Dorsolateral prefrontal cortex (tissue), 120 donors: ENCODE measurements at regions of chr17 and their contacts with region 1.

Region 1: DNA sequence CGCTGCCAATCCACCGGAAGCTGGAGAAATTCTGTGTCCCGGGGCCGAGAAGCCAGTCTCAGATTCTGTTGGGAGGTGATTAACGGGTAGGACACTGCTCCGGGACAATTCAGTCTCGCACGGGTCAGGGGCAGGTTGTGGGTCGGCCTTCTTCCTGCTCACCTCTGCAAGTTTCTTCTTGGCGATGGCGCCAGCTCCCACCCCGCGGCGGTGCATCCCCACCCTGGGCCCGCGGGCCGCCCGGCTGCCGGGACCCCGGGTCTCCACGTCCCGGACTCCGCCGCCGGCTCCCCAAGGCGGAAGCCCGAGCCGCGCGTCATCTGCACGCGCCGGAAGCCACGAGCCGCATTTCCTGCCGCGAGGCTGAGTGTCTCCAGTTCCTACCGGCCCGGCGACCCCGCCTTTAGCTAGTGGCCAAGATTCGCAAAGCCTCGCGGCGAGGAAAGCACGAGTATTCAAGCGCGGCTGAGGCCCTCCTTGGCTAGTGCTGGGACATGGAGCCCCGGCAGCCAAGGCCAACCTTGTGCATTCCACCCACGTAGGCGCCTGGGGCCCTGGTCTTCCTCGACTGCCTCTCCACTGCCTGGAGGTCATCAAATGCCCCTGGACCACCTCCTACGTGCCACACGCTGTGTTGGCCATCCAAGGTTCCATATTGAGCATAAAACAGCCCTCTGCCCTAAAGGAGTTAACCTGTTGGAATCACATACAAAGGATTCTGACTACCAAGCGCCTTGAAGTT is at the start of gene SNF8:
- DNase-seq: peak; percentile 86 to 96 (median 91)
- H3K4me3 ChIP-seq: peak within 1 kb of the TSS; percentile 58 to 100 (median 88)
- H3K27ac ChIP-seq: peak within 1 kb of the TSS in 58 of 59 donors; percentile 47 to 96 (median 86)
- H3K27me3 ChIP-seq: no peaks in the 10 kb centered on the region
- CTCF ChIP-seq: peak in 30 of 56 donors; percentile 7 to 55 (median 24)
- total RNA-seq, gene SNF8: 50.1 to 104 (median 70.5) TPM

Region 2: GRCh38 chr17:48816774-48817590 is 127.7 kb before region 1 on chr17 and contains the start of gene TTLL6:
- intact Hi-C with region 1: loop called in 1 of 2 experiments (anchors 10 kb)
- DNase-seq: peak; percentile 36 to 79 (median 67)
- H3K4me3 ChIP-seq: peak within 1 kb of the TSS; percentile 18 to 67 (median 53)
- H3K27ac ChIP-seq: peak within 1 kb of the TSS in 9 of 59 donors; percentile 17 to 56 (median 36)
- H3K27me3 ChIP-seq: peaks cover 0 to 22% (median 0%) of the 10 kb centered on the region in 45 donors
- CTCF ChIP-seq: peak in 4 of 56 donors; percentile 6 to 21 (median 11)
- total RNA-seq, gene TTLL6: 0.25 to 5.6 (median 1.7) TPM

Region 3: DNA sequence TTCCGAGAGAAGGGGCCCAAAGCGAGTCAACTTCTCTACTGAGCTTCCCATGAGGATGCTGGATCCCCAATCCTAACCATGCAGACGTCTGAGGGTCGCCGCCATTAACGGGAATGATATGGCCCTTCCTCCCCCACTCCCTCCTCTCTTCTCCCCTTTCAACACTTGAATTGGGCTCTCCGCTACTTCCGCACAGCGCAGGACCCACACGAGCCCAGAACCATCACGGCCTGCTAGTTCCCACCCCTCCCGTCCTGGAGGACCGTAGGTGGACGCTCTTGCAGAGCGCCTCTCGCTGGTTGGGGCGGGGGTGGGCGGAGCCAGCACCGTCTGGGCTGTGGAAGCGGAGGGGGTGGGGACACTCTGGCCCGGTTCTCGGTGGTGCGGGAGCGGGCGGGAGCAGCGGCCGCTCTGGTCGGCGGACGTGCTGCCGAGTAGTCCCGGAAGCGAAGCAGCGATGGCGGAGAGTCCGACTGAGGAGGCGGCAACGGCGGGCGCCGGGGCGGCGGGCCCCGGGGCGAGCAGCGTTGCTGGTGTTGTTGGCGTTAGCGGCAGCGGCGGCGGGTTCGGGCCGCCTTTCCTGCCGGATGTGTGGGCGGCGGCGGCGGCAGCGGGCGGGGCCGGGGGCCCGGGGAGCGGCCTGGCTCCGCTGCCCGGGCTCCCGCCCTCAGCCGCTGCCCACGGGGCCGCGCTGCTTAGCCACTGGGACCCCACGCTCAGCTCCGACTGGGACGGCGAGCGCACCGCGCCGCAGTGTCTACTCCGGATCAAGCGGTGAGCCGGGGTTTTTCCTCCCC is 36.4 kb before region 1 on chr17 and contains the start of gene UBE2Z:
- intact Hi-C with region 1: loop called in 1 of 2 experiments (anchors 2 kb)
- DNase-seq: peak; percentile 87 to 96 (median 93)
- H3K4me3 ChIP-seq: peak within 1 kb of the TSS; percentile 57 to 98 (median 81)
- H3K27ac ChIP-seq: peak within 1 kb of the TSS; percentile 5 to 98 (median 91)
- H3K27me3 ChIP-seq: no peaks in the 10 kb centered on the region
- CTCF ChIP-seq: peak in 51 of 56 donors; percentile 10 to 68 (median 47)
- total RNA-seq, gene UBE2Z: 65.4 to 132 (median 91.1) TPM

Region 4: DNA sequence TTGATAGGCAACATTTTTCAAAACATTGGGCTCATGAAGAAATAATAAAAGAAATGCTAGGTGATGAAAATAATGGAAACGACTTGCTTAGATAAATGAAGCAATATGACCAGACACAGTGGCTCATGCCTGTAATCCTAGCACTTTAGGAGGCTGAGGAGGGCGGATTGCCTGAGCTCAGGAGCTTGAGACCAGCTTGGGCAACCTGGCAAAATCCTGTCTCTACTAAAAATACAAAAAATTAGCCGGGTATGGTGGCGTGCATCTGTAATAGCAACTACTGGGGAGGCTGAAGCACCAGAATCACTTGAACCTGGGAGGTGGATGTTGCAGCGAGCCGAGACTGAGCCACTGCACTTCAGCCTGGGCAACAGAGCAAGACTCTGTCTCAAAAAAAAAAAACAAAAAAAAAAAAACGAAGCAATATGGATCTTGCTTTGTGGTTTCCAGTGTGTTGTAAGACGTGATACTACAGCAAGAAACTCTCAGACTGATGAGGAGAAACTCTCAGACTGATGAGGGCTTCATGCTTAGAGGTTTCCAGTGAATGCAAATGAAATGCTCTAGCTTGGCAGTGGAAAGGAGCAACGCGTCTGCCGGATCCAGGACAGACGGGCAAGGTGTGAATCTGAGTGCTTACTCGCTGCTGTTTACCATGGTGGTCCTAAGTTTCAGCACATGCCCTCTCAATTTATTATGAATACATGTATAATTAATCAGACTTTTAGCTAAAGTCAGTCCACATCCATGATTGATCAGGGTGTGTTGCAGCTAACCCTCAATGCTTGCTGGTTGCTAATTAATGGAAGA is 41.0 kb after region 1 on chr17:
- intact Hi-C with region 1: no loop called
- DNase-seq: no peak
- H3K4me3 ChIP-seq: no peak overlapping the region
- H3K27ac ChIP-seq: no peak overlapping the region
- H3K27me3 ChIP-seq: peaks cover 0 to 81% (median 49%) of the 10 kb centered on the region in 45 donors
- CTCF ChIP-seq: no peak